Activated T-helper 1 cell treated with anti-CD3 and anti-CD28 coated beads, Interleukin-12 subunit alpha, Interleukin-12 subunit beta, Interleukin-2, Interleukin-4 antibody, amounts not matched to agents 30 ng/mL and 10 ng/mL and 1 ng/mL, durations not matched to agents 14 hours and 24 hours and 36 hours (primary cell): ENCODE measurements at regions of chr12 and their contacts with region 1.

Region 1: GRCh38 chr12:62758216-62758615 is 176.7 kb downstream of the PPM1H start:
- DNase-seq: no peak
- H3K4me3 Mint-ChIP-seq: no peak overlapping the region
- H3K27ac Mint-ChIP-seq: no peak overlapping the region
- H3K4me1 Mint-ChIP-seq: peaks cover 36% of the 10 kb centered on the region
- H3K27me3 Mint-ChIP-seq: peaks cover 3% of the 10 kb centered on the region

Region 2: GRCh38 chr12:62640910-62641448 is 117.2 kb before region 1 on chr12:
- intact Hi-C with region 1: loop called (anchors 5 kb)
- DNase-seq: no peak
- H3K4me3 Mint-ChIP-seq: no peak overlapping the region
- H3K27ac Mint-ChIP-seq: peak overlapping the region; percentile 54
- H3K4me1 Mint-ChIP-seq: peaks cover 17% of the 10 kb centered on the region
- H3K27me3 Mint-ChIP-seq: peaks cover 18% of the 10 kb centered on the region

Region 3: DNA sequence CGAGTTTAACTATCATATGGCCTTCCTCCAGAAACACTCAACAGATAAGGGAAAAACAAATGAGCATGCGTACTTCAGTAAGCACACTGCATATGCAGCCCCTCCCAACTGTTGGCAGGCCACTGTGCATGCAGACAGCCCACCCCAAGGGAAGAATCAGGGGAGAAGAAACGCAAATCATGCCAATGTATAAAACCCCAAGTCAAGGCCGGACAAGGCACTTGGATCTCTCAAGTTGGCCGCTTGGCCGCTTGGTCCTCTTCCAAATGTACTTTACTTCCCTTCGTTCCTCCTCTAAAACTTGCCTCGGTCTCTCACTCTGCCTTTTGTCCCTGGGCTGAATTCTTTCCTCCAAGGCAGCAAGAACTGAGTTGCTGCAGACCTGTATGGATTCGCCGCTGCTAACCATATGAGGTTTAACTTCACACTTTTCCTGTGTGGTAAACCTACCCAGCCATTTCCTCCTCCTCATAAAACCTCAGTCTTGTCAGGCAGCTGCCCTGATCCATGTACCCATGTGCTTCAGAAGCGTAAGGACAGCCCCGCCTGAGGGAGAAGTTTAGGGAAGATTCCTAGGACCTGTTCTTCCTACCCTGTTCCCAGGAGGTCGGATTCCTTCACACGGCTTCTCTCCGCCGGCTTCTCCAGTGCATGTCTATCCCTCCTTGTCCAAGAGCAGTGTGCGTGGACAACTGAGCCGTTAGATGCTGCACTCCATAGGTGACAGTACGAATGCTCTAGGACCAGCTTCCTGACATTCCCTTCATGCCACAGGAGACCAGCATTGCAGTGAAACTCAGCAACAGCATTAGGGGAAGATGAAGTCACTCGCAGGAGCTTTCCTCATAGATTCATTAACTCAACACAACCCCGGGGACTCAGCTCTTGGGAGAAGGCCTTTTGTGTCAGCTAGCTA is 103.6 kb before region 1 on chr12:
- intact Hi-C with region 1: no loop called
- DNase-seq: no peak
- H3K4me3 Mint-ChIP-seq: no peak overlapping the region
- H3K27ac Mint-ChIP-seq: no peak overlapping the region
- H3K4me1 Mint-ChIP-seq: peaks cover 7% of the 10 kb centered on the region
- H3K27me3 Mint-ChIP-seq: peaks cover 30% of the 10 kb centered on the region

Region 4: GRCh38 chr12:62873116-62873742 is 115.0 kb after region 1 on chr12:
- intact Hi-C with region 1: no loop called
- DNase-seq: no peak
- H3K4me3 Mint-ChIP-seq: no peak overlapping the region
- H3K27ac Mint-ChIP-seq: no peak overlapping the region
- H3K4me1 Mint-ChIP-seq: no peaks in the 10 kb centered on the region
- H3K27me3 Mint-ChIP-seq: no peaks in the 10 kb centered on the region

Region 5: DNA sequence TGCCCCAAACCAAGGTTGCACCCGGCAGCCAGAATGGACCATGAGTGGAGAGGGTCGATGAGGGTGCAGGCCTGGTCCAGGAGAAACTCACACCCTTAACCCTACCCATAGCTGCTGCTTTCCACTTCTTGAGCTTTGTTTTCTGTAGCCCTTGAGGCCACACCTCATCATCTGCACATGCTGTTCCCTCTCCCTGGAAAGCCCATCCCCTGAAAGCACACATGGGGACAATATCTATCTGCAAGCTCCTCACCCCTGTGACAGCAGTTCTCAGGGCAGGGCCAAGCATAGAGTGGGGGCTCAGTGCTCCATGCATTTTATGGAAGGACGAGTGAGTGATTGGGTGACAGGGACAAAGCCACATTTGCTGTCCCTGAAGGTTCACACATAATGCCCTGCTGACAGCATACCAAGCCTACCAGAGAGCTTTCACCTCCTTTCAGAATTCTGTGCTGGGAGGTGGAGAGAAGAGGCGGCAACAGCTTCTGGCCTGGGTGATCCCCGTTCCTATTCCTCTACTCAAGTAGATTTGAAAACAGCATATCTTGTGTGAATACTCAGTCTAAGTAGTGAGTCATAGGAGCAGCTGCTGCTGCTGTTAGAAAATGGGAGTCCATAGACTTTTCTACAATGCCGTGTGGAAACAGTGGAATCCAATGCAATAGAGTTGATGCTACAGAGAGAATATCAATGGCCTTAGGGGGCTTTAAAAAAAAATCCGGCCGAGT is 1130.9 kb after region 1 on chr12:
- intact Hi-C with region 1: no loop called
- DNase-seq: no peak
- H3K4me3 Mint-ChIP-seq: no peak overlapping the region
- H3K27ac Mint-ChIP-seq: no peak overlapping the region
- H3K4me1 Mint-ChIP-seq: no peaks in the 10 kb centered on the region
- H3K27me3 Mint-ChIP-seq: no peaks in the 10 kb centered on the region